ENCODE measurements at regions of chr21 and their contacts with region 1.

Region 1: DNA sequence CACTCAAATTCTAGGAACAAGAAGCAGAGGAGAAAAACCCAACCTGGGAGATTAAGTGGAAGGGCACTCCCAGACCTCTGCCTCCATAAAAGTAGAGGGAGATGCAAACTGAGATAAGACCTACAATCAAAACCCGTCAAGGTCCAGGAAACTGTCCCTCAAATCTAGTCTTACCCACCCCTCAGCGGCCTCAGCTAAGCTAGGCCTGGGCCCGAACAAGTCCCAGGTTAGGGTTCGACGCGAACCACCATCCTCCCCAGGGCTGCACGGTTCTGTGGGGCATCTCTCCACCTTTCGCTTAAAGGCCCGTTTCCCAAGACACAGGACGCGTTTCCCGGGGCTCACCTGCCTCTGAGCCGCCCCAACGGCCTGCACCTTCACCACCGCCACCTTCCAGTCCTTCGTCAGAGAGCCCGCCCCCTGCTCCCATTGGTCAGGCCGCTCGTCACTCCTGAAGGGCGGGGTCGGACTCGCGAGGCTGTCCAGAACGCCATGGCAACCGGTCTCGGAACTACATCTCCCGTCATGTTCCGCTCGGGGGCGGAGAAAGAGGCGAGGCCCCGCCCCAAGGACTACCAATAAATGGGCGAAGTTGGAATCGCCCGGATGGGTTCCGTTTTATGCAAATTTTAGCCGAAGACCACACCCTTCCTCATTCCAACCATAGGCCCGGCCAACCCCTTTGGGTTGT is at the start of gene CRYZL1:
- DNase-seq: peak; percentile 100
- H3K4me3 ChIP-seq: peak within 1 kb of the TSS; percentile 87 to 94
- H3K4me3 Mint-ChIP-seq: peak within 1 kb of the TSS; percentile 93 to 99 (median 98)
- H3K27ac ChIP-seq: peak within 1 kb of the TSS; percentile 67
- H3K27ac Mint-ChIP-seq: peak within 1 kb of the TSS; percentile 88 to 100 (median 97)
- H3K4me1 ChIP-seq: peaks cover 28% of the 10 kb centered on the region
- H3K4me1 Mint-ChIP-seq: peaks cover 17 to 50% (median 28%) of the 10 kb centered on the region in 4 donors
- H3K27me3 ChIP-seq: peaks cover 7% of the 10 kb centered on the region
- H3K27me3 Mint-ChIP-seq: peaks cover 5 to 15% of the 10 kb centered on the region in 2 donors
- total RNA-seq, gene CRYZL1: 63.9 to 64.2 TPM

Region 2: GRCh38 chr21:32612075-32612998 is 1029.1 kb before region 1 on chr21 and contains the start of gene CFAP298:
- CTCF ChIA-PET with region 1: no interaction called
- POLR2A ChIA-PET with region 1: no interaction called
- intact Hi-C with region 1: loop called (anchors 1 kb)
- DNase-seq: peak; percentile 90 to 97 (median 92)
- H3K4me3 ChIP-seq: peak within 1 kb of the TSS; percentile 95 to 99
- H3K4me3 Mint-ChIP-seq: peak within 1 kb of the TSS; percentile 91 to 98 (median 96)
- H3K27ac ChIP-seq: peak within 1 kb of the TSS; percentile 86
- H3K27ac Mint-ChIP-seq: peak within 1 kb of the TSS; percentile 98 to 99 (median 99)
- H3K4me1 ChIP-seq: peaks cover 12% of the 10 kb centered on the region
- H3K4me1 Mint-ChIP-seq: peaks cover 8 to 32% (median 20%) of the 10 kb centered on the region in 4 donors
- H3K27me3 ChIP-seq: no peaks in the 10 kb centered on the region
- H3K27me3 Mint-ChIP-seq: peaks cover 1 to 2% of the 10 kb centered on the region in 2 donors
- total RNA-seq, gene CFAP298: 29.4 to 39.1 TPM

Region 3: DNA sequence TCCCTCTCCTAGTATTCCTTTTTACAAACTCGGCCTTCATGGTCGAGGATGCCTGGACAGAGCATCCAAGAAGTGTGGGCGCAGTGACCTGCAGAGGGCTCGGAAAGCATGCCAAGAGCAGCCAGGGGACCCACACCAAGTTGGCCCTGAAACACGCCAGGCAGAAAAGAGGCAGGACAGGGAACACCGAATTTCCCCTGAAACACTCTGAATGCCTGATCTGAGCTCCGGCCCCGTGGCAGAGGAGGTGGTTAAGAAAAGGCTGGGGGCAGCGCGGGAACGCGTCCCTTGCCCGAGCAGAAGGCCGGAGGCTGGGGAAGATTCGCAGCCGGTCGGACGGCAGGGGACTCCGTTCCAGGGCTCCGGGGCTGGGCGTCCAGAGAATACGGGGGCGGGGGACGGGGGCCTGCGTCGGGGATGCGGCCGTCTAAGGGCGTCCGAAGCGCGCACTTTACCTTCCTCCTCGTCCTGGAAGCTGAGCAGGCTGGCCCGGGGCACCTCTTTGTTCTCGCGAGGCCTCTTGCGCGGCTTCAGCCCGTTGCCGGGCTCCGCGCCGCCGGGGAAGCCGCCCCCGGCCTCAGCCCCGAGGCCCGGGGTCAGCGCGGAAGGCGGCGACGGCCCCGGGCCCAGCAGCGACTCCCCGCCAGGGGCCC is 870.5 kb before region 1 on chr21:
- CTCF ChIA-PET with region 1: interaction called, 3 read pairs
- POLR2A ChIA-PET with region 1: no interaction called
- intact Hi-C with region 1: loop called (anchors 1 kb)
- DNase-seq: no peak
- H3K4me3 ChIP-seq: peak overlapping the region; percentile 77 to 85
- H3K4me3 Mint-ChIP-seq: peak overlapping the region; percentile 91 to 98 (median 96)
- H3K27ac ChIP-seq: peak overlapping the region; percentile 71
- H3K27ac Mint-ChIP-seq: peak overlapping the region; percentile 55 to 97 (median 94)
- H3K4me1 ChIP-seq: peaks cover 57% of the 10 kb centered on the region
- H3K4me1 Mint-ChIP-seq: peaks cover 39 to 70% (median 56%) of the 10 kb centered on the region in 4 donors
- H3K27me3 ChIP-seq: no peaks in the 10 kb centered on the region
- H3K27me3 Mint-ChIP-seq: peaks cover 0 to 3% of the 10 kb centered on the region in 2 donors

Region 4: GRCh38 chr21:33542640-33543504 is 98.6 kb before region 1 on chr21 and contains the start of gene SON:
- CTCF ChIA-PET with region 1: no interaction called
- POLR2A ChIA-PET with region 1: interaction called, 11 read pairs
- intact Hi-C with region 1: loop called (anchors 1 kb)
- DNase-seq: peak; percentile 96 to 99 (median 98)
- H3K4me3 ChIP-seq: peak within 1 kb of the TSS; percentile 87 to 96
- H3K4me3 Mint-ChIP-seq: peak within 1 kb of the TSS; percentile 96 to 100 (median 98)
- H3K27ac ChIP-seq: peak within 1 kb of the TSS; percentile 99
- H3K27ac Mint-ChIP-seq: peak within 1 kb of the TSS; percentile 98 to 100 (median 100)
- H3K4me1 ChIP-seq: peaks cover 52% of the 10 kb centered on the region
- H3K4me1 Mint-ChIP-seq: peaks cover 24 to 57% (median 36%) of the 10 kb centered on the region in 4 donors
- H3K27me3 ChIP-seq: no peaks in the 10 kb centered on the region
- H3K27me3 Mint-ChIP-seq: no peaks in the 10 kb centered on the region
- total RNA-seq, gene SON: 436 to 454 TPM

Region 5: GRCh38 chr21:33825915-33826314 is 184.4 kb after region 1 on chr21:
- CTCF ChIA-PET with region 1: no interaction called
- POLR2A ChIA-PET with region 1: no interaction called
- intact Hi-C with region 1: no loop called
- DNase-seq: no peak
- H3K4me3 ChIP-seq: no peak overlapping the region
- H3K4me3 Mint-ChIP-seq: no peak overlapping the region
- H3K27ac ChIP-seq: no peak overlapping the region
- H3K27ac Mint-ChIP-seq: no peak overlapping the region
- H3K4me1 ChIP-seq: no peaks in the 10 kb centered on the region
- H3K4me1 Mint-ChIP-seq: no peaks in the 10 kb centered on the region
- H3K27me3 ChIP-seq: no peaks in the 10 kb centered on the region
- H3K27me3 Mint-ChIP-seq: peaks cover 0 to 2% of the 10 kb centered on the region in 2 donors

Region 6: DNA sequence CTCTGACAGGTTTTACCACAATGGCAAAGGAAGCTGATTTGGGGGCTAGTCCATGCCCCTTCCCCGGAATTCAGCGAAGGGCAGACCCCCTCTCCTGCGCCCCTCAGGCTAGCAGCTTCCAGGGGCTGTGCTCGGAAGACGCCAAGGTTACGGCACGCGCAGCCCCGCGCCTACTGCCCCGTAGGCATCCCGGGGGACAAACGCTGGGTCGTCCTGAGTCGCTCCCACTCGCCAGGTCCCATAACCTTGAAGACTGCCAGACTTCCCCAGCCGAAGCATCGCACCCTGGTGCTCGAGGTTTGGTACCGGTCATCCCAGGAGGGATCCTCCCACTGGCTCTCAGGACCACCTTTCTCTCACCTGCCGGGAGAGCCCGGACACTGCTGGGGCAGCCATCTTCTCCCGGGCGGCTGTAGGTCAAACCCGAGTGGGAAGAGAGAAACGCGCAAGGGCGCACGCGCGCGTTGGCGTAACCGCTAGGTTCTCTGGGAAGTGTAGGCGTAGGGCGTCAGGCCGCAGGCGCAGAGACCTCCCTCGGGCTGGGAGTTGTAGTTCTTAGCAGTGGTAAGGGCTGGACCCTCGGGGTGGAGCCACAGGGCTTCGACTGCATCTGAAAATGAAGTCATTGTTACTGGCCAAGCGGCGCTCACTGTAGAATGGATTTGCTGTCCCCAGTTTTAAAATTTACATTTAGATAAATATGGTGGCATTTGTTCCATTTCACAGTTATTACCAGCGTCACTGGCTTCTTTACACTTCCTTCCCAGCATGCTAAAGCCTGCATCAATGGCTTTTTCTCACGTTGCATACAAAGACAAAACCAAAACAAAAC is 274.1 kb after region 1 on chr21 and contains the start of gene ATP5PO:
- CTCF ChIA-PET with region 1: no interaction called
- POLR2A ChIA-PET with region 1: no interaction called
- intact Hi-C with region 1: loop called (anchors 2 kb)
- DNase-seq: peak; percentile 94 to 96 (median 94)
- H3K4me3 ChIP-seq: peak within 1 kb of the TSS; percentile 90
- H3K4me3 Mint-ChIP-seq: peak within 1 kb of the TSS; percentile 97 to 99 (median 98)
- H3K27ac ChIP-seq: peak within 1 kb of the TSS; percentile 91
- H3K27ac Mint-ChIP-seq: peak within 1 kb of the TSS; percentile 92 to 99 (median 99)
- H3K4me1 ChIP-seq: peaks cover 35% of the 10 kb centered on the region
- H3K4me1 Mint-ChIP-seq: peaks cover 17 to 34% (median 28%) of the 10 kb centered on the region in 4 donors
- H3K27me3 ChIP-seq: no peaks in the 10 kb centered on the region
- H3K27me3 Mint-ChIP-seq: no peaks in the 10 kb centered on the region
- total RNA-seq, gene ATP5PO: 126 to 143 TPM

Region 7: GRCh38 chr21:34157521-34157920 is 516.0 kb after region 1 on chr21:
- CTCF ChIA-PET with region 1: no interaction called
- POLR2A ChIA-PET with region 1: no interaction called
- intact Hi-C with region 1: no loop called
- DNase-seq: no peak
- H3K4me3 ChIP-seq: no peak overlapping the region
- H3K4me3 Mint-ChIP-seq: no peak overlapping the region
- H3K27ac ChIP-seq: no peak overlapping the region
- H3K27ac Mint-ChIP-seq: no peak overlapping the region
- H3K4me1 ChIP-seq: no peaks in the 10 kb centered on the region
- H3K4me1 Mint-ChIP-seq: peaks cover 0 to 2% (median 0%) of the 10 kb centered on the region in 4 donors
- H3K27me3 ChIP-seq: no peaks in the 10 kb centered on the region
- H3K27me3 Mint-ChIP-seq: no peaks in the 10 kb centered on the region

Region 8: GRCh38 chr21:34614633-34615486 is 973.4 kb after region 1 on chr21 and contains the start of gene RCAN1:
- CTCF ChIA-PET with region 1: no interaction called
- POLR2A ChIA-PET with region 1: no interaction called
- intact Hi-C with region 1: loop called (anchors 1 kb)
- DNase-seq: peak; percentile 85 to 91 (median 88)
- H3K4me3 ChIP-seq: peak within 1 kb of the TSS; percentile 18 to 61
- H3K4me3 Mint-ChIP-seq: peak within 1 kb of the TSS; percentile 90 to 95 (median 92)
- H3K27ac ChIP-seq: peak within 1 kb of the TSS; percentile 31
- H3K27ac Mint-ChIP-seq: peak within 1 kb of the TSS; percentile 85 to 96 (median 93)
- H3K4me1 ChIP-seq: peaks cover 16% of the 10 kb centered on the region
- H3K4me1 Mint-ChIP-seq: peaks cover 14 to 25% (median 20%) of the 10 kb centered on the region in 4 donors
- H3K27me3 ChIP-seq: no peaks in the 10 kb centered on the region
- H3K27me3 Mint-ChIP-seq: peaks cover 0 to under 1% of the 10 kb centered on the region in 2 donors
- total RNA-seq, gene RCAN1: 4.7 to 6.3 TPM

Measured in CD4-positive, alpha-beta memory T cell (primary cell).